Activated T-helper 2 cell treated with anti-CD3 and anti-CD28 coated beads, Interferon-gamma antibody, Interleukin-2, Interleukin-4, amounts not matched to agents 10 μg/mL and 5 μg/mL and 100 μg/mL, durations not matched to agents 14 hours and 24 hours and 36 hours (primary cell): ENCODE measurements at regions of chr3 and their contacts with region 1.

Region 1: DNA sequence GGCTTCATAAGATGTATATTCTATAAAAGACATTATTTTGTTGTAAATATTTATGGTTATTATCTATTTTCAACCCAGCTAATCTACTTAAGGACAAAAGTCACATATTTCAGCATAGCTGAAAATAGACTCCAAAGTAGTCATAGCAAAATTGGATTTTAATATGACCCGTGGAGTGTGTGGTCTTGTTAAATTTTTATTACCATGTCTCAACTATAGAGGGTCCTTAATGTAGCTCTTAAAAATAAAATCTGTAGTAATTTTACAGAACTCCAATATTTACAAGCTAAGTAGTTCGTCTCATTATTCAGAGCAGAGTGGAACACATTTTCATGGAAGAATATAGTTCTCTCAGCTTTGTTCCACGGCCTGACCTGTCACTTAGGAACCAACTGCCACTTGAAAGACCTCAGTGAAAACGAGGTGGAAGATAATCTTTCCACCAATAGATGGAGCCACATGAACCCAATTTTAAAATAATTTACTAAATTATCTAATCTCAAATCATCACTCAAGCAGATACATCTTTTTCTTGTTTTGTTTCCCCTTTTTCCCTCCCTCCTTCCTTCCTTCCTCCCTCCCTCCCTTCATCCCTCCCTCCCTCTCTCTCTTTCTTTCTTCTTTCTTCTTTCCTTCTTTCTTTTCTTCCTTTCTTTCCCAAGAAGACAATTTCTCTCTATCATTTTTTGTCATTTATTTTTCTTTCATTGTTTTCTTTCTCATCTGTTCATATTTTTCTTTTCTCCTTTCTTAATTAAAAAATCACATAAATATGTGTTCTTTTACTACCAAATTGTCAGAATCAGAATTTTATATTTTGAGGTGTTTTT is 97.2 kb downstream of the CLDN1 start:
- DNase-seq: no peak
- H3K4me3 Mint-ChIP-seq: no peak overlapping the region
- H3K27ac Mint-ChIP-seq: no peak overlapping the region
- H3K4me1 Mint-ChIP-seq: peaks cover 4% of the 10 kb centered on the region
- H3K27me3 Mint-ChIP-seq: peaks cover 4% of the 10 kb centered on the region

Region 2: GRCh38 chr3:190249414-190249813 is 24.3 kb after region 1 on chr3:
- intact Hi-C with region 1: no loop called
- DNase-seq: no peak
- H3K4me3 Mint-ChIP-seq: no peak overlapping the region
- H3K27ac Mint-ChIP-seq: no peak overlapping the region
- H3K4me1 Mint-ChIP-seq: no peaks in the 10 kb centered on the region
- H3K27me3 Mint-ChIP-seq: no peaks in the 10 kb centered on the region

Region 3: GRCh38 chr3:190384241-190384863 is 159.3 kb after region 1 on chr3:
- intact Hi-C with region 1: loop called (anchors 2 kb)
- DNase-seq: no peak
- H3K4me3 Mint-ChIP-seq: no peak overlapping the region
- H3K27ac Mint-ChIP-seq: no peak overlapping the region
- H3K4me1 Mint-ChIP-seq: no peaks in the 10 kb centered on the region
- H3K27me3 Mint-ChIP-seq: peaks cover 7% of the 10 kb centered on the region

Region 4: DNA sequence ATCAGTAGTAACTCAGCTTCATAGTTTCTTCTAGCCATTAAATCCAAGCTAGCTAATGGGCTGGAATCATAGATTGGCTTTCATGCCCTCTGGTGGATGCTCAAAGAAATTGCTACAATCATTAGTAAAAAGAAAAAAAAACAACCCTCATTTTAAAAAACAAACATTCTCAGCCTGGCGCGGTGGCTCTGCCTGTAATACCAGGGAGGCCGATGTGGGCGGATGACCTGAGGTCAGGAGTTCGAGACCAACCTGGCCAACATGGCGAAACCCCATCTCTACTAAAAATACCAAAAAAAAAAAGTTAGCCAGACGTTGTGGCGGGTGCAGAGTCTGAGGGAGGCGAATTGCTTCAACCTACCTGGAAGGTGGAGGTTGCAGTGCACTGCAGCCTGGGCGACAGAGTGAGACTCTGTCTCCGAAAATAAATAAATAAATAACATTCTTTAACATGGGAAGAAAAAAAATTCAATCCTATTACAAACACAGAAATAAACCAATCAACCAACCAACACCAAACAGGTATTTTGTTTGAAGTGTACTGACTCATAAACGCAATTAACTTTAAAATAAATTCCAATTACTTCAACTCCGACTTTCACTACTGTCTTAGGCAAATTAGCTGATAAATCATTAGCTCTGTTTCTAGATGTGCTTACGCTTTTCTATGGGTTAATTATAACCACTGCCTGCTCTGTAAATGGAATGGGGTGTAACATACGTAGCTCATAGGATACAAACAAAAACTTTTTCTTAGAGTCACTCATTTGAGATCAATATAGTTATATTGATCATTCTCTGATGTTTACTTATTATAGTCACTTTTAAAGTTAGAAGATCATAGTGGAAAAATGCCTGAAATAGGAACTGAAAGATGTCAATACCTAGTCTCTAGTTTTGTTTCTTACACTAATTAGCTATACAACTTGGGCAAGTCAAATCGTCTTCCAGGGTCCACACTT is 199.7 kb after region 1 on chr3:
- intact Hi-C with region 1: loop called (anchors 1 kb)
- DNase-seq: peak; percentile 28
- H3K4me3 Mint-ChIP-seq: no peak overlapping the region
- H3K27ac Mint-ChIP-seq: peak overlapping the region; percentile 38
- H3K4me1 Mint-ChIP-seq: peaks cover 6% of the 10 kb centered on the region
- H3K27me3 Mint-ChIP-seq: peaks cover 11% of the 10 kb centered on the region